Caco-2 (cell line): ENCODE measurements at regions of chr2 and their contacts with region 1.

Region 1: DNA sequence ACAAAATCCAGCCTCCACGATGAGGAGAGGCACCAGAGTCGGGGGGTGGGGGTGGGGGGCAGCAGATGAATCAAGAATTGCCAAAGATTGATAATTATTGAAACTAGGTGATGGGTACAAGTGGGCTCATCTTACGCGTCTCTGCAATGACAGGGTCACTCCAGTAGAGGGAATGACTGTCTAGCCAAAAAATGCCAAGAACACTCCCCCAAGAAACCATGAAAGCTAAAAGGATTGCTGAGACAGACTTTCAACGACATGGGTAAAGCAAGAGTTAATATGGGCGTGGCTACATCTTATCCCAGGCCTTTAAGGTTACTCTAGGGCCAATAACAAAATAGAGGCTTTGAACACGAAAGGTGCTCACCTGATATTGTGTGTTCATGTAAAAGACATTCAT is 86.5 kb downstream of the STK39 start:
- DNase-seq: peak in 1 of 2 experiments; percentile 54
- H3K4me3 ChIP-seq: no peak overlapping the region
- H3K4me3 Mint-ChIP-seq: no peak overlapping the region
- H3K27ac Mint-ChIP-seq: no peak overlapping the region
- H3K4me1 ChIP-seq: no peaks in the 10 kb centered on the region
- H3K4me1 Mint-ChIP-seq: no peaks in the 10 kb centered on the region
- H3K27me3 ChIP-seq: no peaks in the 10 kb centered on the region
- H3K27me3 Mint-ChIP-seq: no peaks in the 10 kb centered on the region
- CTCF ChIP-seq: peak; percentile 53 to 59

Region 2: DNA sequence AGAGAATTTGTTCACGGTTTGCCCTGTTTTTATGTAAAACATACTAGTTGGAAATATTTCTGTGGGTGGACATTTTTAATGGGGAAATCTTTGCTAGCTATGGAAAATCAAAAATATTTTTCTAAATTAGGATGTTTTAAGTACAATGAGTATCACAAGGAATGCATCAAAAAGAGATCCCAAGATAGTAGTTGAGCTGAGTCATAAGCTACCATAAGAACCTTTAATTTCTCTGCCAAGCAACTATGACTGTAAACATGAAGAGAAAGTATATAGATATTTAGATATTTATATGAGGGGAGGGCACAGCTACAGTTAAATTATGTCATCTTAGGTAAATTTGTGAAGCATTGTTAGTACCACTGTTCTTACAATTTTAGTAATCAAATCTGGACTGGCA is 626.5 kb before region 1 on chr2:
- CTCF ChIA-PET with region 1: no interaction called
- POLR2A ChIA-PET with region 1: no interaction called
- intact Hi-C with region 1: no loop called
- DNase-seq: no peak
- H3K4me3 ChIP-seq: no peak overlapping the region
- H3K4me3 Mint-ChIP-seq: no peak overlapping the region
- H3K27ac Mint-ChIP-seq: no peak overlapping the region
- H3K4me1 ChIP-seq: no peaks in the 10 kb centered on the region
- H3K4me1 Mint-ChIP-seq: no peaks in the 10 kb centered on the region
- H3K27me3 ChIP-seq: no peaks in the 10 kb centered on the region
- H3K27me3 Mint-ChIP-seq: no peaks in the 10 kb centered on the region
- CTCF ChIP-seq: no peak

Region 3: GRCh38 chr2:168293766-168294165 is 132.9 kb after region 1 on chr2:
- CTCF ChIA-PET with region 1: interaction called, 7 read pairs
- POLR2A ChIA-PET with region 1: no interaction called
- intact Hi-C with region 1: loop called (anchors 1 kb)
- DNase-seq: no peak
- H3K4me3 ChIP-seq: no peak overlapping the region
- H3K4me3 Mint-ChIP-seq: no peak overlapping the region
- H3K27ac Mint-ChIP-seq: no peak overlapping the region
- H3K4me1 ChIP-seq: peaks cover 3% of the 10 kb centered on the region; the same call in 1 of the 2 replicates
- H3K4me1 Mint-ChIP-seq: no peaks in the 10 kb centered on the region
- H3K27me3 ChIP-seq: no peaks in the 10 kb centered on the region
- H3K27me3 Mint-ChIP-seq: peaks cover 3% of the 10 kb centered on the region
- CTCF ChIP-seq: peak in 1 of 2 experiments; percentile 20

Region 4: GRCh38 chr2:168336864-168337263 is 176.0 kb after region 1 on chr2:
- CTCF ChIA-PET with region 1: interaction called, 21 read pairs
- POLR2A ChIA-PET with region 1: no interaction called
- intact Hi-C with region 1: loop called (anchors 1 kb)
- DNase-seq: peak; percentile 72 to 77
- H3K4me3 ChIP-seq: no peak overlapping the region
- H3K4me3 Mint-ChIP-seq: no peak overlapping the region
- H3K27ac Mint-ChIP-seq: no peak overlapping the region
- H3K4me1 ChIP-seq: no peaks in the 10 kb centered on the region
- H3K4me1 Mint-ChIP-seq: no peaks in the 10 kb centered on the region
- H3K27me3 ChIP-seq: no peaks in the 10 kb centered on the region
- H3K27me3 Mint-ChIP-seq: peaks cover 3% of the 10 kb centered on the region
- CTCF ChIP-seq: peak; percentile 56 to 82